ENCODE measurements at regions of chr12 and their contacts with region 1.

Region 1: DNA sequence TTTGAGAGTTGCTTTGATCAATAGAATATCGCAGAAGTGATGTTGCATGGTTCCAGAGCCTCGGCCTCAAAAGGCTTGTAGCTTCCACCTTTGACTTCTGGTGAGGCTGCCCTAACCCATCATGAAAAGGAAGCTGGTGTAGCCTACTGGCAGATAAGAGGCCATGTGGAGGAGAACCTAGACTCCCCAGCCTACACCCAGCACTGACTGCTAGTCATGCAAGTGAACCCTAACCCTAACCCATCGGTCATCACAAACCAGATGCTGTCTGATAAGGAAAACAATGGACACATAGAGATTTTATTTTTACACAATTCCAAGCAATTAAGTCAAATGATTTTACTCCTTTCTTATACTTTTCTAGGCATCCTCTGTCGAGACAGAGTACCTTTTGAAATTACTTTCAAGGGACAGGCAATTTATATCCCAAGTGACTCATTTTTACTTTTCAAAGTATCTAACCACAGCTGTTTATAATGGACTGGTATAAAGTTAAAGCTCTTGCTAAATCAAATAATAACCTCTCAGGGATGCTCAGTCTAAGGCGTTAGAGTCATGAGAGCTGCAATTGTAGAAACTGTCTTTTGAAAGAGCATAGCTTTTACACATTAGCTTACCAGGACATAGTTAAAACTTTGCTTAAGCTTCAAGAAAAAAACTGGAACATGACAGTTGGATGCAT is 17.6 kb downstream of the PTPRB start:
- DNase-seq: no peak
- H3K4me3 ChIP-seq: no peak overlapping the region
- H3K27ac ChIP-seq: no peak overlapping the region
- H3K4me1 ChIP-seq: peaks cover 21% of the 10 kb centered on the region
- H3K27me3 ChIP-seq: no peaks in the 10 kb centered on the region
- CTCF ChIP-seq: no peak
- POLR2A ChIP-seq: no peak

Region 2: DNA sequence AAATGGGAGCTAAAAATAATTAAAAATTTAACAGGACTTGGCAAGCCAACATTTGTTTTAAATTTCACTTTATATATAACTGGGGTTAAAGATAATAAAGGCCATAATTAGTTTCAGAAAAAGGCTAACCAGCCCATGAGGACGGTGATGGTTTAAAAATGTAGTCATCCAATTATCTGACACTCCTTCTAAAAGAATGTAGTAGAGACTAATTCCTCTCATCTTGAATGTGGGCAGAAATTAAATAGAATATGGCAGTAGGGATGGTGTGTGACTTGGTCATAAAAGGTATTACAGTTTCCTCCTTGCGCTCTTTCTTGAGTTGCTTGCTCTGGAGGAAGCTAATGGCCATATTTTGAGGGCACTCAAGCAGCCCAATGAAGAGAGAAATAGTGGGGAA is 66.7 kb after region 1 on chr12:
- CTCF ChIA-PET with region 1: interaction called, 3 read pairs
- POLR2A ChIA-PET with region 1: no interaction called
- dilution Hi-C with region 1: no loop called
- intact Hi-C with region 1: loop called (anchors 2 kb)
- DNase-seq: no peak
- H3K4me3 ChIP-seq: no peak overlapping the region
- H3K27ac ChIP-seq: no peak overlapping the region
- H3K4me1 ChIP-seq: peaks cover 10% of the 10 kb centered on the region
- H3K27me3 ChIP-seq: no peaks in the 10 kb centered on the region
- CTCF ChIP-seq: no peak
- POLR2A ChIP-seq: no peak

Measured in endothelial cell of umbilical vein (primary cell).